Calu3 (cell line): ENCODE measurements at regions of chr11 and their contacts with region 1.

Region 1: GRCh38 chr11:44203270-44204043 is 106.5 kb downstream of the ALX4 start:
- DNase-seq: peak; percentile 43
- H3K4me3 Mint-ChIP-seq: no peak overlapping the region
- H3K27ac Mint-ChIP-seq: peak overlapping the region; percentile 66
- H3K4me1 Mint-ChIP-seq: peaks cover 20% of the 10 kb centered on the region
- H3K27me3 Mint-ChIP-seq: no peaks in the 10 kb centered on the region
- CTCF ChIP-seq: no peak

Region 2: DNA sequence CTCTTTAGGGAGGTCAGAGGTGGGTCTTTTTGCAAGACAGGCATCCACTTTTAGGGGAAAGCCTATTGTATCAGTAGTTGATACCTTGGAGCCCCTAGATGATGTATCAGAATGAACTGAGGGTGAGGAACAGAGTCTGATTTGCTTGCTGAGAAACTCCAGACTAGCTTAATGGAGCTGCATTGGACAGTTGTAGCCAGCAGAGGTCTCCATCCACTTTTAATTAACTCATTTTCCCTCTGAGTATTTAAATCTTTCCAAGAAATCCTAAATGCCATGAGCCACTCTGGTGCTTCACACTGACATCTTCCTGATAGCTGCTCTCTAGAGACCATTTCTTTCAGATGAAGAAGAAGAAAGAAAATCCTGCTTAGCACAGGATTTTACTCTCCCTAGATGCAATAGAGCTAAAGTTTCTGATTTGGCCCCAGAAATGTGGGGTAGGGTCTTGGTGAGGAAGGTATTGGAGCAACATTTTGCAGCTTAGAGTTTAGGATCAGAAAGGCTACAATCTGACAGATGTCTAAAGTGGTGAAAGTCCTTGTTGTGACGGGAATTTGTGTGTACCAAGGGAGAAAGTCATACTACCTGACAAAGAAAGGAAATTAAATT is 70.0 kb before region 1 on chr11:
- CTCF ChIA-PET with region 1: no interaction called
- intact Hi-C with region 1: loop called (anchors 5 kb)
- DNase-seq: peak; percentile 8
- H3K4me3 Mint-ChIP-seq: no peak overlapping the region
- H3K27ac Mint-ChIP-seq: no peak overlapping the region
- H3K4me1 Mint-ChIP-seq: no peaks in the 10 kb centered on the region
- H3K27me3 Mint-ChIP-seq: no peaks in the 10 kb centered on the region
- CTCF ChIP-seq: peak; percentile 40